ENCODE measurements at regions of chr15 and their contacts with region 1.

Region 1: DNA sequence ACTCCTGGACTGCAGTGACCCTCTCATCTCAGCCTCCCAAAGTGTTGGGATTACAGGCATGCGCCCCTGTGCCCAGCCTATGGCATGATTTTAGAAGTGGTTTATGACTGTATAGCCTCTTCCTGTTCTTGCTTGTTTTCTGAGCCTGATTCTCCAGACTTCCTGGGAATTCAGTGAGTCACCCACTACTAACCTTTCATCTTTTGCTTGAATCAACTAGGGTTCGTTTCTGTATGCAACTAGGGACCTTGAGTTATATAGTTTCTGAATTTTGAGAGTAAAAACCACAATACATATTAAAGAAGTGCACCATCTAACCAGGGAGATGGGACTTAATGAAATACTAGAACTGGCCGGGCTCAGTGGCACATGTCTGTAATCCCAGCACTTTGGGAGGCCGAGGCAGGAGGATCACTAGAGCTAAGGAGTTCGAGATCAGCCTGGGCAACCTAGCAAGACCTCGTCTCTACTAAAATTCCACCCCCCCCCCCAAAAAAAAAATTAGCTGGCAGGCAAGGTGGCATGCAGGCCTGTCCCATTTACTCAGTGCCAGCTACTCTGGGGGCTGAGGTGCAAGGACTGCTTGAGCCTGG is 76.0 kb downstream of the ZNF609 start:
- DNase-seq: no peak
- ATAC-seq: peak; percentile 37
- H3K4me3 ChIP-seq: no peak overlapping the region
- H3K27ac ChIP-seq: peak overlapping the region; percentile 22; the same call in 1 of the 2 replicates
- H3K4me1 ChIP-seq: peaks cover 19% of the 10 kb centered on the region
- H3K27me3 ChIP-seq: no peaks in the 10 kb centered on the region
- CTCF ChIP-seq: no peak
- EP300 ChIP-seq: no peak
- POLR2A ChIP-seq: no peak
- RAD21 ChIP-seq: no peak

Region 2: DNA sequence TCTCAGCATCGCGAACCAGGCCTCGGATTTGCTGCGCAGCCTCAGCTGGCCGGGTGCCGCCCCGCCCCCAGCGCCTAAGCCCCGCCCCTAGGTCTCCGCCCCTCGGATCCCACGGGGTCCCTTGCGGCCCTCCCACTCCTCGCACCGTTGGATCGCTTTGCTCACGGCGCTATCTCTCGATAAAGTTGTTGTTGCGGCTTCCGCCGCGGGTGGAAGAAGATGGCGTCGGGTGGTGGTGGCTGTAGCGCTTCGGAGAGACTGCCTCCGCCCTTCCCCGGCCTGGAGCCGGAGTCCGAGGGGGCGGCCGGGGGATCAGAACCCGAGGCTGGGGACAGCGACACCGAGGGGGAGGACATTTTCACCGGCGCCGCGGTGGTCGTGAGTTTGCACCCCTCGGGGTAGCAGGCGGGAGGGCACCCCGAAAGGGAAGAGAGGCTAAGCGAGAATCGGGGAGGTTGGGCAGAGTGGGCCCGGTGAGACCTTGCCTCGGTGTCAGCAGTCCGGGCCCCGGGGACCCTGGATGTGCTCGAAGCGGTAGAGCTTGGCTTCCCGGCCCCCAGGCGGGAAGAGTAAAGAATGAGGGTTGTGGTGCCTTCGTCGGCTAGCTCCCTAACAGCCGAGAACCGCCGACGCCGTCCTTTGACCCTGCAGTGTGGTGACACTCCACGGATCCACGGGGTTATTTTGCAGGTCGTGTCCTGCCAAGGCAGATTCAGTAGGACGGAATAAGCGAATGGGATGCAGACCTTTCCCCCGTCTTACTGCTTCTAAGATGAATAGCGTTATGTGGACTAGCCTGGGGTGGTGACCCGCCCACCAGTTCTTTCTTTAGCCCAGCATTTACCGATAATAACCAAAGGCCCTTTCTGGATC is 440.3 kb before region 1 on chr15 and contains the start of gene SNX1:
- CTCF ChIA-PET with region 1: no interaction called
- POLR2A ChIA-PET with region 1: no interaction called
- RAD21 ChIA-PET with region 1: no interaction called
- SMC1A ChIA-PET with region 1: no interaction called
- in situ Hi-C with region 1: no loop called
- intact Hi-C with region 1: no loop called
- DNase-seq: peak; percentile 70
- ATAC-seq: peak; percentile 72
- H3K4me3 ChIP-seq: peak within 1 kb of the TSS; percentile 96
- H3K27ac ChIP-seq: peak within 1 kb of the TSS; percentile 74
- H3K4me1 ChIP-seq: peaks cover 21% of the 10 kb centered on the region
- H3K27me3 ChIP-seq: no peaks in the 10 kb centered on the region
- CTCF ChIP-seq: peak in 1 of 3 experiments; percentile 3; a peak in 1 of 6 replicates
- EP300 ChIP-seq: no peak
- POLR2A ChIP-seq: peak; percentile 98
- RAD21 ChIP-seq: no peak
- polyA plus RNA-seq, gene SNX1: 17.8 to 32.3 TPM

Region 3: DNA sequence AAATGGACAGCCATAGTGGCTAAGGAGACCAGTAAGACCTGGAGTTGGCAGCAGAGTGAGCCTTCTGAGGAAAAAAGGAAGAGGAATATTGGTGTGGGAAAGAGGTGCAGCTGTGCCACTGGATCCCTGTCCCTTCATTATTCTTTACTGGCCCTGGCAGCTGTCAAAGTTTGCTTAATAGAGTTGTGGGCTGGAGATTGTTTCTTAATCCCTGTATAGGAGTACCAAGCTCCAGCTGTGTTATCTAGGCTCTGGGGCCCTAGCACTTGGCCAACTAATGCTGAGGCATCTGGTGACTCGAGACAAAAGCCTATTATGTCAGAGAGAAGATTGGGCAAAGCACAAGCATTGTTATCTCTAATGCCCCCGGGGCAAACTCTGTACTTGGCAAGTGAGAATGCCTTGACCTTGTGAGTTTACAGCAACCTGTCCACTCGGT is 14.6 kb before region 1 on chr15:
- CTCF ChIA-PET with region 1: interaction called, 6 read pairs
- POLR2A ChIA-PET with region 1: interaction called, 3 read pairs
- RAD21 ChIA-PET with region 1: interaction called, 6 read pairs
- SMC1A ChIA-PET with region 1: interaction called, 13 read pairs
- in situ Hi-C with region 1: no loop called
- intact Hi-C with region 1: no loop called
- DNase-seq: no peak
- ATAC-seq: peak; percentile 73
- H3K4me3 ChIP-seq: no peak overlapping the region
- H3K27ac ChIP-seq: no peak overlapping the region
- H3K4me1 ChIP-seq: no peaks in the 10 kb centered on the region
- H3K27me3 ChIP-seq: no peaks in the 10 kb centered on the region
- CTCF ChIP-seq: no peak
- EP300 ChIP-seq: no peak
- POLR2A ChIP-seq: no peak
- RAD21 ChIP-seq: no peak